HepG2 (cell line): ENCODE measurements at regions of chr20 and their contacts with region 1.

Region 1: DNA sequence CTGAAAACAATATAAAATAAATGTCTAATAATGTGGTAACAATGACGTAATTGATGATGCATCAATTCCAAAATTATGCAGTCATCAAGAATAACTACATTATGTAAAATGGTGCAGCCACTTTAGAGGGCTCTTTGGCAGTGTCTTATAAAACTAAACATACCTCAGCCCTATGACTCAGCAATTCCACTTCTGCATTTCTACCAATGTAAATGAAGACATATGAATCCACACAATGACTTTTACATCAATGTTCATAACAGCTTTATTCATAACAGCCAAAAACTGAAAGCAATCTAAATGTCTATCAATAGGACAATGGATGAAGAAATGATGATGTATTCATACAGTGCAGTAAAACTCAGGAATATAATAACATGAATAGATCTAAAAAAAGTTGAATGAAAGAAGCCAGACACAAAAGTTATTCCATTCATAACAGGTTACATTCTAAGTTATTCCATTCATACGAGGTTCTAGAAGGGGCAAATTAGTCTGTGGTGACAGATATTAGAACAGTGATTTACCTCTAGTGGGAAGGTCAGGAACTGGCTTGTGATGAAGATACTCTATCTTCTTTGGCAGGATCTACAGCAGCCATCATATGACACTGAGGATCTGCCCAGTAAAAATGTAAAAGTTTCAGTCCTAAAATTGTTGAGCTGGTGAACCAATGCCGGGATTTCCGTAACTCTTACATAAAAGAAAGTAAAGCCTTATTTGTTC is 396.1 kb downstream of the PLCB1 start:
- DNase-seq: no peak
- ATAC-seq: no peak
- H3K4me3 ChIP-seq: no peak overlapping the region
- H3K27ac ChIP-seq: no peak overlapping the region
- H3K4me1 ChIP-seq: no peaks in the 10 kb centered on the region
- H3K27me3 ChIP-seq: no peaks in the 10 kb centered on the region
- CTCF ChIP-seq: no peak
- EP300 ChIP-seq: no peak
- POLR2A ChIP-seq: no peak
- RAD21 ChIP-seq: no peak

Region 2: GRCh38 chr20:8305449-8305978 is 222.6 kb before region 1 on chr20:
- CTCF ChIA-PET with region 1: no interaction called
- POLR2A ChIA-PET with region 1: no interaction called
- in situ Hi-C with region 1: no loop called
- intact Hi-C with region 1: loop called (anchors 10 kb)
- DNase-seq: peak; percentile 83
- ATAC-seq: peak; percentile 97
- H3K4me3 ChIP-seq: no peak overlapping the region
- H3K27ac ChIP-seq: no peak overlapping the region
- H3K4me1 ChIP-seq: no peaks in the 10 kb centered on the region
- H3K27me3 ChIP-seq: no peaks in the 10 kb centered on the region
- CTCF ChIP-seq: peak; percentile 87
- EP300 ChIP-seq: no peak
- POLR2A ChIP-seq: no peak
- RAD21 ChIP-seq: peak; percentile 87

Region 3: GRCh38 chr20:8545212-8545611 is 17.1 kb after region 1 on chr20:
- CTCF ChIA-PET with region 1: no interaction called
- POLR2A ChIA-PET with region 1: no interaction called
- in situ Hi-C with region 1: no loop called
- intact Hi-C with region 1: no loop called
- DNase-seq: no peak
- ATAC-seq: no peak
- H3K4me3 ChIP-seq: no peak overlapping the region
- H3K27ac ChIP-seq: no peak overlapping the region
- H3K4me1 ChIP-seq: no peaks in the 10 kb centered on the region
- H3K27me3 ChIP-seq: no peaks in the 10 kb centered on the region
- CTCF ChIP-seq: no peak
- EP300 ChIP-seq: no peak
- POLR2A ChIP-seq: no peak
- RAD21 ChIP-seq: no peak

Region 4: GRCh38 chr20:8932192-8933165 is 404.3 kb after region 1 on chr20:
- CTCF ChIA-PET with region 1: no interaction called
- POLR2A ChIA-PET with region 1: no interaction called
- in situ Hi-C with region 1: no loop called
- intact Hi-C with region 1: loop called (anchors 5 kb)
- DNase-seq: no peak
- ATAC-seq: no peak
- H3K4me3 ChIP-seq: no peak overlapping the region
- H3K27ac ChIP-seq: no peak overlapping the region
- H3K4me1 ChIP-seq: no peaks in the 10 kb centered on the region
- H3K27me3 ChIP-seq: peaks cover 0 to 8% of the 10 kb centered on the region in 2 experiments; a peak in 2 of 5 replicates
- CTCF ChIP-seq: no peak
- EP300 ChIP-seq: no peak
- POLR2A ChIP-seq: no peak
- RAD21 ChIP-seq: no peak